ENCODE measurements at regions of chr2 and their contacts with region 1.

Region 1: DNA sequence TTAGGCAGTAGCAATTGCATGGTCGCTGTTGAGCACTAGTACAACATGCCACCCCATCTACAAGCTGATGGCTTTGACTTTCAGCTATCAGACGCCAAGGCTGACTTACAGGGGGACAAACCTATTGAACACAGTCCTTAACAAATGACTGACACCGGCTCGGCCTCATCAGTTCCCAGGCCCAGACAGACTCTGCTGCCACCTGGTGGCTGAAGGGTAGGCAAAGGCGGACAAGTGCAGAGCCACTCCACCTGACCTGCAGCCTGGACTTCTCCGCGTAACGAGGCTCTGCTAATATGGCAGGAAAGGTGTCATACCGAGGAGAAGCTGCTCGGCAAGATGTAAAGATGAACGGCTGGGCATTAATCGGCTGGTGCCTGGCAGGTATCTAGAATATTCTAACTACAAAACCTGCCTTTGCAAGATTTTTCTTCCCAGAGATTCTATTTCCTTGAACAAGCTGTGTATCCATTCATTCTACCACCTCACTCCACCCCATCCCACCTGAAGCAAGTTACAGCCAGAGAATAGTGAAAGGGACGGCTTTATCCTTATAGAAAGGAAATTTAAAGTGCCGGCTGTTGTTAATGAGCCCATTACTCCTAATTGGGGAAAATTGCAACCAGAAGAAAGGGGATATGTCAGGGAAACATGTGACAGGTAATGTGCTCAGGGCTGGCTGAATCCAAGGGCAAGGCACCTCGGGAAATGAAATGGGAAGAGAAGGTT is 67.4 kb downstream of the STEAP3 start:
- DNase-seq: peak; percentile 79
- H3K4me3 Mint-ChIP-seq: no peak overlapping the region
- H3K27ac Mint-ChIP-seq: no peak overlapping the region
- H3K4me1 Mint-ChIP-seq: peaks cover 3% of the 10 kb centered on the region
- H3K27me3 Mint-ChIP-seq: no peaks in the 10 kb centered on the region

Region 2: GRCh38 chr2:119234377-119235019 is 56.5 kb before region 1 on chr2:
- CTCF ChIA-PET with region 1: no interaction called
- intact Hi-C with region 1: loop called (anchors 10 kb)
- DNase-seq: peak; percentile 18
- H3K4me3 Mint-ChIP-seq: no peak overlapping the region
- H3K27ac Mint-ChIP-seq: no peak overlapping the region
- H3K4me1 Mint-ChIP-seq: peaks cover 3% of the 10 kb centered on the region
- H3K27me3 Mint-ChIP-seq: no peaks in the 10 kb centered on the region

Region 3: GRCh38 chr2:119517433-119517832 is 226.4 kb after region 1 on chr2:
- CTCF ChIA-PET with region 1: no interaction called
- intact Hi-C with region 1: no loop called
- DNase-seq: peak; percentile 60
- H3K4me3 Mint-ChIP-seq: no peak overlapping the region
- H3K27ac Mint-ChIP-seq: no peak overlapping the region
- H3K4me1 Mint-ChIP-seq: no peaks in the 10 kb centered on the region
- H3K27me3 Mint-ChIP-seq: peaks cover 25% of the 10 kb centered on the region

Measured in activated naive CD4-positive, alpha-beta T cell treated with anti-CD3 and anti-CD28 coated beads for 36 hours (primary cell).